Heart right ventricle (tissue), 16 donors: ENCODE measurements at regions of chr17 and their contacts with region 1.

Region 1: DNA sequence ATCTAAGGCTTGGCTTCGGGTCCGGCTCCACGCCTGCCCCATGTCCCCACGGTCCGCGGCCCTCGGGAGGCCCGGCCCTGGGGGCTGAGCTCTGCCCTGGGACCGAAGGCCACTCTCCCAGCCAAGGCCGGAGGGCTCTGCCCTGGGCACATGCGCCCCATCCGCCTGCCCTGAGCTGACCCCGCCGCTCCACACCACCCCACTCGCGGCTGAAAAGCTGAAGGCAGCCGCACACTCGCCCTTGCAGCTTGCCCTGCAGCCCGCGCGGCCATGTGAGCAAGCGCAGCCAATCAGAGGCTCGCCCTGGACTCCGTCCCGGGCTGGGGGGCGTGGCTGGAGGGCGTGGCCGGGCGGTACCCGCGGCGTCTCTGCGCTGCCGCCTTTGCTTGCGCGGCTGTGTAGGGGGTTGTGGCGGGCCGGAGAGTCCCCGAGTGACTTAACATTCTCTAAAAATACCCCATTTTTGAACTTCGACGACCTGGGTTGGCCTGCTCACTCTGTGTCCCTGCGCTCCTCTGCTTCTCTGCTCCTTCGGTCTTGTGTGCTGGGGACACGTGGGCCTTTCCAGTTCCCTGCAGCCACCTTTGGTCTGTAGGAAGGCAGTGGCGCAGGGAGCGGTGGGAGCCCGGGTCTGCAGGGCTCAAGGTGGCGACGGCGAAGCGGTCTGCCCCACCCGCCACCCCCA is 8.8 kb upstream of the MAP2K3 start:
- DNase-seq: peak; percentile 94 to 97
- ATAC-seq: peak; percentile 96 to 98 (median 98)
- H3K4me3 ChIP-seq: peak overlapping the region; percentile 49 to 78 (median 65)
- H3K27ac ChIP-seq: peak overlapping the region; percentile 19 to 82 (median 76)
- H3K4me1 ChIP-seq: peaks cover 4 to 41% (median 16%) of the 10 kb centered on the region in 9 donors
- H3K27me3 ChIP-seq: no peaks in the 10 kb centered on the region
- CTCF ChIP-seq: peak in 5 of 9 donors; percentile 12 to 24 (median 18)

Region 2: GRCh38 chr17:21132428-21132827 is 143.3 kb before region 1 on chr17:
- intact Hi-C with region 1: loop called (anchors 2 to 10 kb)
- DNase-seq: no peak
- ATAC-seq: peak in 7 of 8 donors; percentile 52 to 70 (median 63)
- H3K4me3 ChIP-seq: no peak overlapping the region
- H3K27ac ChIP-seq: peak overlapping the region in 4 of 10 donors; percentile 20 to 57 (median 42)
- H3K4me1 ChIP-seq: peaks cover 3 to 44% (median 26%) of the 10 kb centered on the region in 9 donors
- H3K27me3 ChIP-seq: no peaks in the 10 kb centered on the region
- CTCF ChIP-seq: no peak

Region 3: DNA sequence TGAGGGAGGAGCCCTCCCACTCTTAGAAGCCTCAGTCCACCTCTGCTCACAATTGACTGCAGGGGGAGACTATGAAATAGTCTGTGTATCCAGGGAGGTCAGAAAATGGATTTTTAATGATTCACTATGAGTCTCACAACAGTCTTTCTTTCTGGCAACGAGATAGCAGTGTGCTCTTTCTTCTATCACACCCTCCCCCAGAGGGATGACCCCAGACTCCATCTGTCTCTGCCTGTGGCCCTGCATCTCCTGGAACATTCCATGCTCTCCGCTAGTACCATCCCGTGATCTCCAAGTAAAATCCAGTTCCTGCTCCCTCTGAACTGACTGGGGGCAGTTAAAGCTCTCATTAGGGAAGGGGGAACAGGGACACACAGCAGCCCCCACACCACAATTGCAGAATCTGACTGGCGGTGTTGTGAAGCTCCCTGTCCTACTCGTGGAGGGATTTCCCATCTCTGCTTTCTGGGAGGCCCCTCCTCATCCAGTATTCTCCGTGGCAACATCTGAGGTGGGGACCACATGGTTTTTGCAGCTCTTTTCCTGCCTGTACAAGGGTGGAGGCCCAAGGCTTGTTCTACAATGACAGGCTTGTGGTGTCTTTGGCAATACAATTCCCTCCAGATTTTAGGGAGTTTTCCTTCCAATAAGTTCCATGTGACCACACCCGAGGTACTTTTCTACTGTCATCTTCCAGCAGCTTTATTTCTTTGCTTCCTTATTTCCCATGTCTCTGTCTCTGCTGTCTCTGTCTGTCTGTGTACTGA is 42.0 kb before region 1 on chr17:
- intact Hi-C with region 1: no loop called
- DNase-seq: no peak
- ATAC-seq: peak in 5 of 8 donors; percentile 44 to 63 (median 58)
- H3K4me3 ChIP-seq: no peak overlapping the region
- H3K27ac ChIP-seq: peak overlapping the region in 1 of 10 donors; percentile 24
- H3K4me1 ChIP-seq: peaks cover 0 to 17% (median 0%) of the 10 kb centered on the region in 9 donors
- H3K27me3 ChIP-seq: no peaks in the 10 kb centered on the region
- CTCF ChIP-seq: no peak

Region 4: DNA sequence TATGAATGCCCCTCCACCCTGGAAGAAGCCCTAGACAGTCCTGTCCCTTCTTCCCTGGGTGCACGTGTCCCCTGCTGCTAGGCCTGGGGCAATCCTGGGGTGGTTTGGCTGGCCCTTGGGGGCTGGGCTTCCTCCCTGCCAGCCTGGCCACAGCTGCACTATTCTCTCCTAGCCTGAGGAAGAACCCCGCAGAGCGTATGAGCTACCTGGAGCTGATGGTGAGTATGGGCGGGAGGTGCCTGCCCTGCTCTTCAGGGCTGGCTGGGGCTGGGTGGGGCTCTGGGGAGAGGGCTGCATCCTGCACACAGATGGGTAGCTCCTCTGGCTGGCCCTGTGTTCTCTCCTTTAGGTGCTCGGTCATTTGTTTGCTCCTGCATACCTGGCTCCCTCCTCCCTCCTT is 37.6 kb after region 1 on chr17:
- intact Hi-C with region 1: loop called in 1 of 10 experiments (anchors 5 kb)
- DNase-seq: no peak
- ATAC-seq: no peak
- H3K4me3 ChIP-seq: no peak overlapping the region
- H3K27ac ChIP-seq: no peak overlapping the region
- H3K4me1 ChIP-seq: peaks cover 0 to 26% (median 16%) of the 10 kb centered on the region in 9 donors
- H3K27me3 ChIP-seq: no peaks in the 10 kb centered on the region
- CTCF ChIP-seq: no peak

Region 5: GRCh38 chr17:21397341-21398190 is 121.8 kb after region 1 on chr17:
- intact Hi-C with region 1: no loop called
- DNase-seq: no peak
- ATAC-seq: peak in 5 of 8 donors; percentile 25 to 48 (median 36)
- H3K4me3 ChIP-seq: no peak overlapping the region
- H3K27ac ChIP-seq: no peak overlapping the region
- H3K4me1 ChIP-seq: peaks cover 0 to 16% (median 5%) of the 10 kb centered on the region in 9 donors
- H3K27me3 ChIP-seq: no peaks in the 10 kb centered on the region
- CTCF ChIP-seq: no peak

Region 6: DNA sequence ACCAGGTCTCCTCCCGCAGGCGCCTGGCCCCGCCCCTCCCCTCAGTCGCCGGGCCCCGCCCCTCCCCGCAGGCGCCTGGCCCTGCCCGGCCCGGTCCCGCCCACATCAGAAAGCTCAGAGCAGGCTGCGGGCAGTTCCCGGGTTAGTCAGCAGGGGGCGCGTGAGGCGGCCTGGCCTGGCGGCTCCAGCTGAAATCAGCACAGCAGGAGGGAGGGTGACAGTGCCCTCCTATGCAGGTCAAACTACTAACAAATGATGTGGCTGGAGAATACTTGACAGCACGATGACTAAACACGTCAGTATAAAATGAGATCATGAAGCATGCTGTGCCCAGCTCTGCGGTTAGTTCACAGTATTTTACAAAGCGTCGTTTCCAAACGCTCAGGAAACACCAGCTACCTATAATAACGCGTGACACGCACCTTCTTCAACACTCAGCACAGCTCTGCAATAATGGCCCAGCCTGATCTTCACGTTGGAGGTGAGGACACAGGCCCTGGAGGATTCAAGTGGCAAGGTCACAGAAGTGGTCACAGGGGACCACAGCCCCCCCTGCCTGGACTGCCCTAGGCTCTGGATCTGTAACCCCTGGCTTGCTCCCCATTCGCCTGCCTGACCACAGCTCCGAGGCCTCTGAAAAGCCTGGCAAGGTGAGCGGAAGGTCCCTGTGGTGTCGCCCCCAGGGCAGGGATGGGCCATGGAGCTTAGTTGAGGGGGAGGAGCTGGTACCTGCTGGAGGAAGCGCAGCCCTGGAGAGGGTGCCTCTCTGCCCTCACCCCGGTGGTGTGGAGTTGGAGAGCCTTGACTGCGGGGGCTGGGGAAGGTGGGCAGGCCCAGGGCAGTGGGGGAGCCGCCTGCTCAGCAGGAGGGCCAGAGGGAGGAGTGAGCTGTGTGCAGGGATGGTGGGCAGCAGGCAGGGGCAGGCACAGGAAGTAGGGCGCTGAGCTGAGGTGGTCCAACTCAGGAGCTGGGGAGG is 181.6 kb after region 1 on chr17:
- intact Hi-C with region 1: loop called in 7 of 10 experiments (anchors 5 to 10 kb)
- DNase-seq: peak; percentile 86 to 94
- ATAC-seq: peak; percentile 90 to 94 (median 92)
- H3K4me3 ChIP-seq: no peak overlapping the region
- H3K27ac ChIP-seq: no peak overlapping the region
- H3K4me1 ChIP-seq: peaks cover 0 to 11% (median 5%) of the 10 kb centered on the region in 9 donors
- H3K27me3 ChIP-seq: peaks cover 0 to 6% (median 0%) of the 10 kb centered on the region in 7 donors
- CTCF ChIP-seq: peak; percentile 89 to 99 (median 97)